CD4-positive, alpha-beta memory T cell (primary cell): ENCODE measurements at regions of chr19 and their contacts with region 1.

Region 1: GRCh38 chr19:45681391-45682015 is 10.2 kb downstream of the SNRPD2 start:
- DNase-seq: peak; percentile 78 to 89 (median 85)
- H3K4me3 ChIP-seq: peak overlapping the region in 1 of 2 donors; percentile 42
- H3K4me3 Mint-ChIP-seq: peak overlapping the region; percentile 78 to 88 (median 86)
- H3K27ac ChIP-seq: peak overlapping the region; percentile 35
- H3K27ac Mint-ChIP-seq: peak overlapping the region; percentile 57 to 92 (median 78)
- H3K4me1 ChIP-seq: peaks cover 24% of the 10 kb centered on the region
- H3K4me1 Mint-ChIP-seq: peaks cover 11 to 30% (median 20%) of the 10 kb centered on the region in 4 donors
- H3K27me3 ChIP-seq: no peaks in the 10 kb centered on the region
- H3K27me3 Mint-ChIP-seq: peaks cover 0 to 5% of the 10 kb centered on the region in 2 donors

Region 2: DNA sequence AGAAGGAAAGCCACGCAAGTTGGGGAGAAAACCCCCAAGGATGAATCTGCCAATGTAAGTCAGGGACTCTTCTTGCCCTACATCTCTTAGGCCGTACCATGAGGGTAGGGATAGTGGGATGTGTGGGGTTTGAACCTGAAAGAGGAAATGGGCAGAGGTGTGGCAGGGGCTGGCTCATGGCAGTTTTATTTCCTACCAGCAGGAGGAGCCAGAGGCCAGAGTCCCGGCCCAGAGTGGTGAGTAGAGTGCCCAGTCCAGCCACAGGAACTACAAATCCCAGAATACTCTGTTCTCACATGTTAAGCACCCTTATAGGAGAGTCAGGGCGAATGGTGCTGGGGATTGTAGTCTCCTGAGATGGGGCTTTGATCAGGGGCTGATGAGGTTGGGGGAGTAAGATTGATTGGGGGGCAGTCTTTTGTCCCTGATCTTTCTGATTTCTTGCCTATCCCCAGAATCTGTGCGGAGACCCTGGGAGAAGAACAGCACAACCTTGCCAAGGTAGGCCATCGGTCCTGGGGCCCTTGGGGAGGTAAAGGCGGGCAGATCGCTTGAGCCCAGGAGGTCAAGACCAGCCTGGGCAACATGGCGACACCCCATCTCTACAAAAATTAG is 157.8 kb before region 1 on chr19:
- CTCF ChIA-PET with region 1: interaction called, 3 read pairs
- POLR2A ChIA-PET with region 1: no interaction called
- intact Hi-C with region 1: loop called (anchors 1 kb)
- DNase-seq: peak; percentile 81 to 83 (median 82)
- H3K4me3 ChIP-seq: no peak overlapping the region
- H3K4me3 Mint-ChIP-seq: no peak overlapping the region
- H3K27ac ChIP-seq: no peak overlapping the region
- H3K27ac Mint-ChIP-seq: peak overlapping the region; percentile 77 to 87 (median 82)
- H3K4me1 ChIP-seq: peaks cover 3% of the 10 kb centered on the region
- H3K4me1 Mint-ChIP-seq: peaks cover 7 to 21% (median 11%) of the 10 kb centered on the region in 4 donors
- H3K27me3 ChIP-seq: no peaks in the 10 kb centered on the region
- H3K27me3 Mint-ChIP-seq: peaks cover 0 to 2% of the 10 kb centered on the region in 2 donors

Region 3: DNA sequence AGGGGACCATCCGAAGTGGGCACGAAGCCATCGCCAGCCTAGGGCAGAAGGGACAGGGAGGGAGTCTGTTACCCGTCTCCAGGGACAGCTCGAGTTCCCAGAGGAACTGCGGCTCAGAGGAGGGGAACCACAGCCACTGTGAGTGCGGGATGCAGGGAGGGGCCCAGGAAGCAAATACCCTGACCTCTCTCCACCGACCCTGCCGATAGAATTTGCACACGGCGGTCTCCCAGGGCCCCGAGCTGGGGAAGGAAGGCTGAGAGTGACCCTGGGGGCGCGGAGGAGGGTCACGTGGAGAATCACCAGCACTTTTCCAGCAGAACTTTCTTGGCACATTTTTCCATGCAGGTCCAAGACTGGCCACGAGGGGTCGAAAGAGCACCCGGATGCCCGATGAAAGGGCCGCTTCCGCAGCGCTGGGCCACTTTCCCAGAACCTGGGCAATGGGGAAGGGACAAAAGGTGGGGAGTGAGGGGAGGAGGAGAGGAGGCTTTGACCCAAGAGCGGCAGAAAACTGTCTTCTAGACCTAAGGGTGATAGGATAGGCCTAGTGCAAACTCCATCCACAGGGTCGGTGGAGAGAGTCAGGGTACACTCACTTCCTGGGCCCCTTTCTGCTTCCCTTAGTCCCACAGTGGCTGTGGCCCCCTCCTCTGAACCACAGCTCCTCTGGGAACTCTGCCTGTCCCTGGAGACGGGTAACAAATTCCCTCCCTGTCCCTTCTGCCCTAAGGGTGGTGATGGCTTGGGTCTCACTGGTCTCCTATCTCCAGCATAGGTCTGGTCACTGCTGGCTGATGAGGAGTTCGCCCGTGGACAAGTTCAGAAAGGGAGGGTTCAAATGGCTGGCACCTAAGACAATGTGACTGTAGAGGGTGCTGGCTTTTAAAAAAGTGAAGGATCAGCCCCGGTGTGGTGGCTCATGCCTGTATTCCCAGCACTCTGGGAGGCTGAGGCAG is 74.2 kb before region 1 on chr19:
- CTCF ChIA-PET with region 1: interaction called, 4 read pairs
- POLR2A ChIA-PET with region 1: no interaction called
- intact Hi-C with region 1: loop called (anchors 1 kb)
- DNase-seq: peak in 4 of 5 donors; percentile 14 to 36 (median 20)
- H3K4me3 ChIP-seq: no peak overlapping the region
- H3K4me3 Mint-ChIP-seq: peak overlapping the region in 3 of 8 donors; percentile 44 to 65 (median 54)
- H3K27ac ChIP-seq: no peak overlapping the region
- H3K27ac Mint-ChIP-seq: peak overlapping the region in 4 of 7 donors; percentile 4 to 89 (median 42)
- H3K4me1 ChIP-seq: peaks cover 9% of the 10 kb centered on the region
- H3K4me1 Mint-ChIP-seq: peaks cover 5 to 11% (median 8%) of the 10 kb centered on the region in 4 donors
- H3K27me3 ChIP-seq: peaks cover 2% of the 10 kb centered on the region
- H3K27me3 Mint-ChIP-seq: peaks cover 7 to 9% of the 10 kb centered on the region in 2 donors

Region 4: GRCh38 chr19:45667620-45668341 is 13.7 kb before region 1 on chr19 and contains the start of gene GIPR:
- CTCF ChIA-PET with region 1: interaction called, 8 read pairs
- POLR2A ChIA-PET with region 1: interaction called, 19 read pairs
- intact Hi-C with region 1: loop called (anchors 1 kb)
- DNase-seq: peak in 4 of 5 donors; percentile 18 to 67 (median 29)
- H3K4me3 ChIP-seq: peak within 1 kb of the TSS; percentile 72 to 73
- H3K4me3 Mint-ChIP-seq: peak within 1 kb of the TSS; percentile 85 to 94 (median 90)
- H3K27ac ChIP-seq: no peak within 1 kb of the TSS
- H3K27ac Mint-ChIP-seq: peak within 1 kb of the TSS; percentile 12 to 92 (median 87)
- H3K4me1 ChIP-seq: peaks cover 29% of the 10 kb centered on the region
- H3K4me1 Mint-ChIP-seq: peaks cover 19 to 39% (median 30%) of the 10 kb centered on the region in 4 donors
- H3K27me3 ChIP-seq: no peaks in the 10 kb centered on the region
- H3K27me3 Mint-ChIP-seq: peaks cover 4 to 20% of the 10 kb centered on the region in 2 donors
- total RNA-seq, gene GIPR: 6.1 to 6.4 TPM

Region 5: DNA sequence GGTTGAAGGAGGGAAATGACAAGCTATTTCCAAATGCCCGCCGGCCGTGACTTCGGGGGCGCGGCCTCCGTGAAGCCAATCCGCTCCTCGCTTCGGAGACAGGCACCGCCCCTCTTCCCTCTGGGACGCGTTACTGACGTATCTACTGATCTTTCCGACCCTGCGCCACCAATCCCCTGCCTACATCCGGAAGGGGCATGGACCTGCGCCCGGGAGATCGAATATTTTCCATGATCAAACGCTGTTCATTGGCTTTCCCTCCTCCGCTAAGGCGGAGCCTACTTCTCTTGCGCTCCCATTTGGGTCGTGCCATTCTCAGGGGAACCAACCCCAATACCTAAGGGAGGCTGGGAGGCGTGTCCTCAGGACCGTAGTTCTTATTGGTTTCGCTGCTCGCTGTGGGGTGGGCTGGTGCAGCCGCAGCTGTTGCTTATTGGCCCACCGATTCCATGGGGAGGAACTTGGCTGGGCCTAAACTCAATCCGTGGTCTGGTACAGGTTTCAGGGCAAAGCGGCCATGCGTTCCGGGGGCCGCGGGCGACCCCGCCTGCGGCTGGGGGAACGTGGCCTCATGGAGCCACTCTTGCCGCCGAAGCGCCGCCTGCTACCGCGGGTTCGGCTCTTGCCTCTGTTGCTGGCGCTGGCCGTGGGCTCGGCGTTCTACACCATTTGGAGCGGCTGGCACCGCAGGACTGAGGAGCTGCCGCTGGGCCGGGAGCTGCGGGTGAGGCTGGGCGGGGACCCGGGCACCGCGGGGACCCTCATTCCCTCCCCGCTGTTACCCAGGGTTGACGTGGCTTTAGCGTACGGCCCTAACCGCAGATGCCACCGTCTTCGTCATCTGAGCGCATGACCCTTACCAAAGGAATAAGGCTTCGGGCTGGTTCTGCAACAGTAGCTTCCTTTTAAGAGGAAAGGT is 10.9 kb after region 1 on chr19 and contains the start of gene QPCTL:
- CTCF ChIA-PET with region 1: interaction called, 110 read pairs
- POLR2A ChIA-PET with region 1: interaction called, 57 read pairs
- intact Hi-C with region 1: loop called (anchors 1 kb)
- DNase-seq: peak; percentile 98 to 99 (median 98)
- H3K4me3 ChIP-seq: peak within 1 kb of the TSS; percentile 70 to 94
- H3K4me3 Mint-ChIP-seq: peak within 1 kb of the TSS; percentile 90 to 100 (median 94)
- H3K27ac ChIP-seq: peak within 1 kb of the TSS; percentile 88
- H3K27ac Mint-ChIP-seq: peak within 1 kb of the TSS; percentile 91 to 100 (median 97)
- H3K4me1 ChIP-seq: peaks cover 17% of the 10 kb centered on the region
- H3K4me1 Mint-ChIP-seq: peaks cover 11 to 35% (median 17%) of the 10 kb centered on the region in 4 donors
- H3K27me3 ChIP-seq: no peaks in the 10 kb centered on the region
- H3K27me3 Mint-ChIP-seq: no peaks in the 10 kb centered on the region
- total RNA-seq, gene QPCTL: 10.8 to 11.4 TPM

Region 6: DNA sequence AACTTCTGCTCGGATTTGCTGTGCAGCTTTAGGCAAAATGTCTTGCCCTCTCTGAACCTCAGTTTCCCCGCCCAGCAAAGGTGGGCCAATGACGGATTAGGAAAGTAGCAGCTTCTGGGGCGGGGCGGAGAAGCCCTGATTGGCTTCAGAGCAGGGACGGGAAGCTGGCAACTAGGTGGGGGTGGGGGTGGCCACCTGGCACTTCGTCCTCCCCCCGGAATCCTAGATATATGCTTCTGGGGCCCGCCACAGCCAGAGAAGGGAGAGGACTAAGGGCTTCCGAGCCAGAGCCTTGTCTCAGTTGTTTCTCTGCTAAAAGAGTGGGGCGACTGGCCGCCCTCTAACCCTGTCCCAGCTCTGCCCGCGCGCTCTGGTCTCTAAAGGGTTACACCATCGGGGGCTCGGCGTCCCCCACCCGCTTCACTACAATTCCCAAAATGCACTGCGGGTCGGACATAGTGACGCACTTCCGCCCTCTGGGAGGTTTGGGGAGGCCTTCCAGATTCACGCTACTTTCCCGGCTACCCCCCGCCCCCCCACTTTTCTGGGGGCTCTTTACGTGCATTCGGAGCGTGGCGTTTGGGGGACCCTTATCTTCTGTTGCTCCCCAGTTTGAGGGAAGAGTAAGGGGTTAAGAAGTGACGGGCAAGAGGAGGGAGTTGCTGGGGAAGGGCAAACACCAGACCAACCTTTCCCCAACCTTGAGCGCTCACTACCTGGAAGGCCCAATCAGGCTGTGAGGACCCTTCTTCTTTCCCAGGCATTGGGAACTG is 205.1 kb after region 1 on chr19:
- CTCF ChIA-PET with region 1: no interaction called
- POLR2A ChIA-PET with region 1: no interaction called
- intact Hi-C with region 1: no loop called
- DNase-seq: peak; percentile 87 to 93 (median 91)
- H3K4me3 ChIP-seq: peak overlapping the region; percentile 65 to 71
- H3K4me3 Mint-ChIP-seq: peak overlapping the region; percentile 94 to 98 (median 98)
- H3K27ac ChIP-seq: peak overlapping the region; percentile 68
- H3K27ac Mint-ChIP-seq: peak overlapping the region; percentile 97 to 99 (median 99)
- H3K4me1 ChIP-seq: peaks cover 40% of the 10 kb centered on the region
- H3K4me1 Mint-ChIP-seq: peaks cover 11 to 36% (median 19%) of the 10 kb centered on the region in 4 donors
- H3K27me3 ChIP-seq: no peaks in the 10 kb centered on the region
- H3K27me3 Mint-ChIP-seq: peaks cover 0 to under 1% of the 10 kb centered on the region in 2 donors

Region 7: DNA sequence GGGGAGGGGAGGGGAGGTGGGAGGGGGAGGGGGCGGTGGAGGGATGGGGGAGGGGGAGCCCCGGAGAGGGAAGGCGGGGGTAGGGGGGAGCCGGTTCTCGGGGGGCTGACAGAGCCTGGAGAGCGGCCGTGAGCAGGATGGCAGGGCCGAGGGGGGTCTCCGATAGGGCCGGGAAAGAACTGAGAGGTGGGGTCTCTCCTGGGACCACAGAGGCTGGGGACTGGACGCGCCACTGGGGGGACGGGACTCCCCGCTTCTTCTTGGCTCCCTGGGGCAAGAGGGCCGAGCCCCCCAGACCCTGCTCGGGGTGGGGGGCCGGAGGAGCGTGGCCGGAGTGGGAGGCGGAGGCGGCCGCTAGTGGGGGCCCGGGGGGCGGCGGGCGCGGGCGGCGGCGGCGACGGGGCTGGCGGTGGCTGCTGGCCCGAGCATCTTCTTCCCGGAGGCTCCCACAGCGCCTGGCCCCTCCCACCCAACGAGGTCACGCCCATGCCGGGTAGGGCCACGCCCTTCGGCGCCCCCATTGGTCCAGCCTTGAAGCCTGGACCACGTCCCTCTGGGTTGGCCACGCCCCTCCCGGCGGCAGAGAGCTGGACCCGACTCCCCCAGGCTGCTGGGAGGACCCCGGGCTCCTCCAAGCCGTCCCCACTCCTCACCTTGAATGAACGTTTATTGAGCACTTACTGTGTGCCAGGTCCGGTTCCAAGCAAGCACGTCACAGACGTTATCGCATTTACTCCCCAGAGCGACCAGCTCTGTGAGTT is 292.3 kb after region 1 on chr19 and contains the start of gene NOVA2:
- CTCF ChIA-PET with region 1: no interaction called
- POLR2A ChIA-PET with region 1: no interaction called
- intact Hi-C with region 1: no loop called
- DNase-seq: no peak
- H3K4me3 ChIP-seq: no peak within 1 kb of the TSS
- H3K4me3 Mint-ChIP-seq: peak within 1 kb of the TSS in 7 of 8 donors; percentile 21 to 73 (median 52)
- H3K27ac ChIP-seq: no peak within 1 kb of the TSS
- H3K27ac Mint-ChIP-seq: peak within 1 kb of the TSS in 2 of 7 donors; percentile 27 to 54
- H3K4me1 ChIP-seq: peaks cover 24% of the 10 kb centered on the region
- H3K4me1 Mint-ChIP-seq: peaks cover 14 to 23% (median 18%) of the 10 kb centered on the region in 4 donors
- H3K27me3 ChIP-seq: peaks cover 27% of the 10 kb centered on the region
- H3K27me3 Mint-ChIP-seq: peaks cover 48 to 53% of the 10 kb centered on the region in 2 donors
- total RNA-seq, gene NOVA2: not detected